ENCODE measurements at regions of chr16 and their contacts with region 1.

Region 1: DNA sequence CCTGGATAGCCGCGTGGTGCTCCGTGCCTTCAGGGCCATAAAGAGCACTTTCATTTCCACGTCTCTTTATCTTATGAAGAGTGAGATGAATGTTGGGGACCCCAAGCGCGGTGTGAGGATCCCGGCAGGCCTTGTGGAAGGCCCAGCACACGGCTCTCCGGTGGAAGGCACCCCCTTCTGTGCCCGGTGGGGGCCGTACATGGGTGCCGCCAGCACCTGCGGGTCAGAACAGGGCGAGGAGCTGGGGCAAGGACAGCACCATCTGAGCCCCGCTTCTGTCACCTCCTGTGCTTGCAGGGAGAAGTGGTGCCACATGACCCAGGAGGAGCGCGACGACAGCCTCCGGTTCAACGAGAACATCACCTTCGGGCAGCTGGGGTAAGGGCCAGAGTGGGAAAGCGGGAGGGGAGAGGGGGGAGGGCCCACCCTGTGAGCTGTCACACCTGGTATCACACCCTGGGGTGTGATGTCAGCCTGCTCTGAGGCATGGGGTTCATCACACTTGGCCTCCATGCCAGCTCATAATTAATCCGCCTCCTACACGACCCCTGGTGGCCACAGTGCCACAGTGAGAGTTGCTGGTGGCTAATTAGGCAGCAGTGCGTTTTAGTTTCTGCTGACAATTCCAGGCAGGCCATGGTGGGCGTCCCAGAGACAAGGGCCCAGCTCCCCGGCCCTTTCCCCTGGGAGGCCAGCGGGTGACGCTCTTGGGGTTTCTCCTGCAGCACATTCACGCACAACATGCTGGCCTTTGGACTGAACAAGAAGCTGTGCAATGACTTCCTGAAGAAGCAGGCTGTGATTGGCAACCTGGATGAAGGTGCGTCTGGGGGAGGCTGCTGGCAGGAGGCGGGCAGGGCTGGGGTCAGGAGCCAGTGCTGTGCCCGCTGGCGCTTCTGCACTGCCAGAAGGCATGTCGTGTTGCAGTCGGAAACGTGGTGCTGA is 25.7 kb downstream of the CIBAR2 start:
- DNase-seq: peak; percentile 55 to 69
- ATAC-seq: peak; percentile 41 to 68 (median 53)
- H3K4me3 ChIP-seq: no peak overlapping the region
- H3K27ac ChIP-seq: no peak overlapping the region
- H3K4me1 ChIP-seq: peaks cover 6 to 34% (median 21%) of the 10 kb centered on the region in 9 donors
- H3K27me3 ChIP-seq: no peaks in the 10 kb centered on the region
- CTCF ChIP-seq: peak; percentile 60 to 81 (median 70)

Region 2: DNA sequence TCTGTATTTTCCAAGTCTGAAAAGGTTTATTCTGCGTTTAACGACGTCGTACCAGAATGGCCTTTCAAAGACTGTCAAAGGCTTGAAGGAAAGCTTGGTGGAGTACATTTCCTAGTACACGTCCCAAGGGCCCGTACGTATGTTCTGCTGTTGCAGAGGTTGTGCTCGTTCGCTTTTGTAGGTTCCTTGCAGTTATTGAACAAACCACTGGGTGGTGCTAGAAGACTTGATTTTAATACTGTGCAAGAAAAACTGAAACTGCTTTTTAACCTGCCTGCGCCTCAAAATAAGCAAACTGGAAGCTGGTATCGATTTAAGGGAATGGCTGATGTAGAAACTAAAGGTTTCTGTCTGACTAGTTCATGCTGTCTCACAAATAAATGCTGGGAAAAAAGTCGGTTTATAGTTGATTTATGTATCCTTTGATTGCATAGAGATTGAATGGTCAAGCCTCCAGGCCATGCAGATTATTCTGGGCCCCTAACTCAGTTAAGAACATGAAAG is 332.2 kb before region 1 on chr16:
- intact Hi-C with region 1: loop called in 2 of 10 experiments (anchors 10 kb)
- DNase-seq: peak in 1 of 2 donors; percentile 78
- ATAC-seq: peak; percentile 60 to 78 (median 73)
- H3K4me3 ChIP-seq: peak overlapping the region in 1 of 10 donors; percentile 15
- H3K27ac ChIP-seq: peak overlapping the region in 1 of 10 donors; percentile 67
- H3K4me1 ChIP-seq: peaks cover 0 to 78% (median 28%) of the 10 kb centered on the region in 9 donors
- H3K27me3 ChIP-seq: no peaks in the 10 kb centered on the region
- CTCF ChIP-seq: peak; percentile 64 to 92 (median 87)

Region 3: GRCh38 chr16:84765616-84766580 is 320.7 kb before region 1 on chr16:
- intact Hi-C with region 1: loop called in 1 of 10 experiments (anchors 10 kb)
- DNase-seq: no peak
- ATAC-seq: peak in 3 of 8 donors; percentile 17 to 38 (median 34)
- H3K4me3 ChIP-seq: no peak overlapping the region
- H3K27ac ChIP-seq: peak overlapping the region in 1 of 10 donors; percentile 36
- H3K4me1 ChIP-seq: peaks cover 0 to 14% (median 0%) of the 10 kb centered on the region in 9 donors
- H3K27me3 ChIP-seq: no peaks in the 10 kb centered on the region
- CTCF ChIP-seq: no peak

Region 4: DNA sequence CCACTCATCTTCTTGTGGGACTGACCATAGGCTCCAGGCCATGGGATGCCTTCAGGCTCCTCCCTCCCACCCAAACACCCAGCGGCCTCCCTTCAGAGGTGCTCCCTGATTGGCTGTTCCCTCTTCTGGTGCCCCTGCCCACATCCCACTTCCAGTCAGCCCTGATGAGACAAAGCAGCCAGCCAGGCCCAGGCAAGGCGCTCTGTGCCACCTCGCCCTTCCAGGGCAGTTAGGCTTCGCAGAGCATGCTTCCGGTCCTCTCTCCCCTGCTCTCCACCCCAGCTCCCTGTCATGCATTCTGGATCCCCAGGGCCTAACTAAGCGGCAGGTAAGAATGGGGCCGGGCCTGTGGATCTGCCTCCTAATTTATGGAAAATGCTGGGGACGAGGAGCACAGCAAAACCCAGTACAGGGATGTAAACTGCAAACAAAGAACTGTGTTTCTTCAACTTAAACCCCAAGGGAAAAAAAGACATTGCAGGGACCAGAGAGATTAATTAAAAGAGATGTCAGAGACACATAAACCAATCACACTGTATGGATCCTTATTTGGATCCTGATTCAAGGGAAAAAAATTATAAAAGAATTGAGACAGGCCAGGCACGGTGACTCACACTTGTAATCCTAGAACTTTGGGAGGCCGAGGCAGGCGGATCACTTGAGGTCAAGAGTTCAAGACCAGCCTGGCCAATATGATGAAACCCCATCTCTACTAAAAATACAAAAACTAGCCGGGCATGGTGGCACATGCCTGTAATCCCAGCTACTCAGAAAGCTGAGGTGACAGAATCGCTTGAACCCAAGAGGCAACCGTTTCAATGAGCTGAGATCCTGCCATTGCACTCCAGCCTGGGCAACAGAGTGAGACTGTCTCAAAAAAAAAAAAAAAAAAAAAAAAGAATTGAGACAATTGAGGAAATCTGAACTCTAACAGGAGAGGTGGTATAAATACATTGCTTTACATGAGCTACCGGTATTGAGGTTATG is 101.2 kb before region 1 on chr16:
- intact Hi-C with region 1: loop called in 2 of 10 experiments (anchors 5 to 10 kb)
- DNase-seq: no peak
- ATAC-seq: no peak
- H3K4me3 ChIP-seq: no peak overlapping the region
- H3K27ac ChIP-seq: peak overlapping the region in 1 of 10 donors; percentile 64
- H3K4me1 ChIP-seq: peaks cover 0 to 52% (median 12%) of the 10 kb centered on the region in 9 donors
- H3K27me3 ChIP-seq: no peaks in the 10 kb centered on the region
- CTCF ChIP-seq: no peak

Region 5: GRCh38 chr16:85010931-85011845 is 75.4 kb before region 1 on chr16 and contains the start of gene ZDHHC7:
- intact Hi-C with region 1: loop called in 3 of 10 experiments (anchors 2 to 10 kb)
- DNase-seq: peak; percentile 88 to 91
- ATAC-seq: peak; percentile 94 to 98 (median 96)
- H3K4me3 ChIP-seq: peak within 1 kb of the TSS; percentile 65 to 98 (median 86)
- H3K27ac ChIP-seq: peak within 1 kb of the TSS; percentile 89 to 99 (median 98)
- H3K4me1 ChIP-seq: peaks cover 0 to 73% (median 35%) of the 10 kb centered on the region in 9 donors
- H3K27me3 ChIP-seq: no peaks in the 10 kb centered on the region
- CTCF ChIP-seq: peak in 3 of 9 donors; percentile 6 to 24 (median 13)
- total RNA-seq, gene ZDHHC7: 36.2 to 55.5 (median 43.2) TPM

Region 6: GRCh38 chr16:85027349-85027957 is 59.2 kb before region 1 on chr16 and contains the start of gene KIAA0513:
- intact Hi-C with region 1: loop called in 3 of 10 experiments (anchors 5 kb)
- DNase-seq: peak; percentile 93 to 96
- ATAC-seq: peak; percentile 89 to 94 (median 91)
- H3K4me3 ChIP-seq: peak within 1 kb of the TSS; percentile 59 to 88 (median 83)
- H3K27ac ChIP-seq: peak within 1 kb of the TSS; percentile 54 to 96 (median 81)
- H3K4me1 ChIP-seq: peaks cover 5 to 48% (median 30%) of the 10 kb centered on the region in 9 donors
- H3K27me3 ChIP-seq: no peaks in the 10 kb centered on the region
- CTCF ChIP-seq: peak in 7 of 9 donors; percentile 10 to 58 (median 25)
- total RNA-seq, gene KIAA0513: 5.9 to 10.9 (median 8.5) TPM